MCF 10A (cell line): ENCODE measurements at regions of chr16 and their contacts with region 1.

Region 1: GRCh38 chr16:66872943-66873684 is 7.2 kb upstream of the PDP2 start:
- DNase-seq: peak; percentile 97
- H3K4me3 Mint-ChIP-seq: peak overlapping the region; percentile 71
- H3K27ac Mint-ChIP-seq: peak overlapping the region; percentile 51
- H3K4me1 Mint-ChIP-seq: peaks cover 14% of the 10 kb centered on the region
- H3K27me3 Mint-ChIP-seq: no peaks in the 10 kb centered on the region
- CTCF ChIP-seq: peak; percentile 90

Region 2: DNA sequence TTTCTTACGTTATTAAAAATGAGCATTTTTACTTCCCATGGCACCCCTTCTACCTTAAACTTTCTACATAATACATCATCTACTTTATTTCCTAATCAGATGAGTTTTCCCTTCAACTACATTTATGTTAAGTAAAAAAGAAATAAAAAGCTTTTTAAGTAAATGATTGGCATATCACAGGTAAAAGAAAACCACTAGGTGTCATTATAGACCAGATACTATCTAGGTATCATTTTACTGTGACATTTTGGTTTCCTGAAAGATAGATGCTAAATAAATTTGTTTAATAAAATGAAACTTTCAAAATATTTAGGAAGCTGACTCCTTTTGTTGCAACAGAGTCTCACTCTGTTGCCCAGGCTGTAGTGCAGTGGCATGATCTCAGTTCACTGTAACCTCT is 310.7 kb before region 1 on chr16:
- CTCF ChIA-PET with region 1: interaction called, 14 read pairs
- POLR2A ChIA-PET with region 1: no interaction called
- intact Hi-C with region 1: no loop called
- DNase-seq: no peak
- H3K4me3 Mint-ChIP-seq: no peak overlapping the region
- H3K27ac Mint-ChIP-seq: no peak overlapping the region
- H3K4me1 Mint-ChIP-seq: no peaks in the 10 kb centered on the region
- H3K27me3 Mint-ChIP-seq: no peaks in the 10 kb centered on the region
- CTCF ChIP-seq: peak; percentile 24

Region 3: DNA sequence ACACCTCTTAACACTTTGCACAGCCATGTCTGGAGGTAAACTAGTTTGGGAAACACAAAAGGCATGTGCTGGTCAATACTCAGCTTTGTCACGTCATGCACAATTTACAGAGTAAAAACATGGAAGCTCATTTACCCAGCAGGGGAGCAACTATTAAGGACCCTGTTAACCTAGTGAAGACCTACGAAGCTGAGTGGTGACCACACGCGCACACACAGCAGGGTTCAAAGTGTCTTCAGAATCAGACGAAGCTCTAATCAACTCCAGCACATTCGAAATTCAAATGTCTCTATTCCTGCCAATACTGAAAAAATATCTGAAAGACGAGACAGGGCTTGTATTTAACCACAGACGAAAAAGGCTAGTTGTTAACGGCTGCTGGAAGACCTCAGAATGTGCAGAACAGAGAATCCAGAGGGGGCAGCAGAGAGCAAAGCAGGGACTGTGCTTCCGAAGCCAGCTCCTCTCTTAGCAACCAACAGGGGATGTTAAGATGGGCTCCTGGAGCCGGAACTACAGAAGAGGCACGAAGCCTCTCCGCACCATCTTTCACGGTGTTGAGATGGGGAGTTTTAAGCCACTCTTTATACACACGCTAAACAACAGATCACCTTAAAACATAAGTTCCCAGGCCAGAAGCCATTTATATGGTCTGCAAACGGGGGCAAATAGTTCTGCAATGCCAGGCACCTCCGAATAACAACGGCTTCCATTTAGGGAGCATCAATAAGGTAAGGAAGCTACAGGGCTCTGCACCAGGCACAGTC is 222.2 kb before region 1 on chr16:
- CTCF ChIA-PET with region 1: interaction called, 12 read pairs
- POLR2A ChIA-PET with region 1: interaction called, 3 read pairs
- intact Hi-C with region 1: no loop called
- DNase-seq: peak; percentile 84
- H3K4me3 Mint-ChIP-seq: peak overlapping the region; percentile 50
- H3K27ac Mint-ChIP-seq: peak overlapping the region; percentile 64
- H3K4me1 Mint-ChIP-seq: peaks cover 39% of the 10 kb centered on the region
- H3K27me3 Mint-ChIP-seq: no peaks in the 10 kb centered on the region
- CTCF ChIP-seq: peak; percentile 90

Region 4: DNA sequence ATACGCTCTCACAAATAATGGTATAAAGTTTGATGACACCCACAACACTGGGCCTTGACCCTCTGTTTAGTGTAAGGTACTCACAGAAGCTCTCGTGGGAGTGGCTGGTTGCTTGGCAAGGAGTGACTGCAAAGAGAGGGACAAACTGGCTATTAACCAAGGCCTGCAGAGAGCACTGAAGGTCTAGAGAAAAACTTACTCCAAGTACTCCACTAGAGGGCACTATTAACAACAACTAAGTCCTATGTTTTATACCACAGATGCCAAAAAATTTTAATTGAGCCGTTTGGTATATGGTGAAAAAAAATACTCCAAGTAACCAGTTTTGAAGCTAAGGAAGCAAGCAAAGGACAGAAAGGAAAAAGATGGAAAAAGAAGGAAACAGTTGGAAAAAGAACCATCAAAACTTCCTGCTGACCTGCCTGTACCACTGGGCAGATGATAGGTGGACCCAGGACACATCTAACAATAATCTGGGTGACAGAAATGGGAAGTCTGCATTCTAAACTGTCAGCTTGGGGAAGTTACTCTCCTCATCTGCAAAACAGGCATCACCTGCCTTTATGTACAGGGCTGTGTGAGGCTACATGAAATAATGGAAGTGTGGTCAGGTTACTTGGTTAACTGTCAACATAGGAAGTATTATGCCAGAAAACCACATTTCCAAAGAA is 144.9 kb before region 1 on chr16:
- CTCF ChIA-PET with region 1: interaction called, 46 read pairs
- POLR2A ChIA-PET with region 1: interaction called, 3 read pairs
- intact Hi-C with region 1: loop called (anchors 1 kb)
- DNase-seq: peak; percentile 63
- H3K4me3 Mint-ChIP-seq: no peak overlapping the region
- H3K27ac Mint-ChIP-seq: no peak overlapping the region
- H3K4me1 Mint-ChIP-seq: peaks cover 7% of the 10 kb centered on the region
- H3K27me3 Mint-ChIP-seq: no peaks in the 10 kb centered on the region
- CTCF ChIP-seq: peak; percentile 53

Region 5: GRCh38 chr16:66830422-66831404 is 42.4 kb before region 1 on chr16 and contains the start of gene NAE1:
- CTCF ChIA-PET with region 1: interaction called, 197 read pairs
- POLR2A ChIA-PET with region 1: interaction called, 23 read pairs
- intact Hi-C with region 1: loop called (anchors 2 kb)
- DNase-seq: peak; percentile 86
- H3K4me3 Mint-ChIP-seq: peak within 1 kb of the TSS; percentile 66
- H3K27ac Mint-ChIP-seq: no peak within 1 kb of the TSS
- H3K4me1 Mint-ChIP-seq: peaks cover 31% of the 10 kb centered on the region
- H3K27me3 Mint-ChIP-seq: no peaks in the 10 kb centered on the region
- CTCF ChIP-seq: peak; percentile 94
- total RNA-seq, gene NAE1: 65.5 and 65.7 TPM in 2 replicates

Region 6: DNA sequence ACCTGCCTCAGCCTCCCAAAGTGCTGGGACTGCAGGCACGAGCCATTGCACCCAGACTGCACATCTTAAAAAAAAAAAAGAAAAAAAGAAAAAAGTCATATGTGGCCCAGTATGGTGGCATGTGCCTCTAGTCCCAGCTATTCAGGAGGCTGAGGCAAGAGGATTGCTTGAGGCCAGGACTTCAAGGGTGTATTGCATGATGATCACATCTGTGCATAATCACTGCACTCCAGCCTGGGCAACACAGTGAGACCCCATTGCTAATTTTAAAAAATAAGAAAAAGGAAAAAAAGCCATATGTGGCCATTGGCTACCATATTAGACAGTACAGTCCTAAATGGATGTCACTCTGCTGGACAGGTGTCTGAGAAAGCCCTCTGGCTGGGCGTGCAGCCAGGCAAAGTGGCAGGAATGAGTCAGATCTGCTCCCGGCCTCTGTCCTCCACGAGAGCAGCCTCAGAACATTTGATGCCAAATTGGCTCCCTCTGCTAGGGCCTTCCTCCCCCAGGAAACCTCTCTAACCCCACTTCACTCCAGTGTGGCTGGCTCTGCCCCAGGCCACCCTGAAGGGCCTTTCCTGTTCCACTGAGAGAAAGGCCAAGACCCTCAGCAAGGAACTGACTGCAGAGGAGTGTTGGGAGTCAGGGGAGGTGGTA is 14.2 kb before region 1 on chr16:
- CTCF ChIA-PET with region 1: interaction called, 43 read pairs
- POLR2A ChIA-PET with region 1: no interaction called
- intact Hi-C with region 1: no loop called
- DNase-seq: peak; percentile 87
- H3K4me3 Mint-ChIP-seq: no peak overlapping the region
- H3K27ac Mint-ChIP-seq: no peak overlapping the region
- H3K4me1 Mint-ChIP-seq: peaks cover 5% of the 10 kb centered on the region
- H3K27me3 Mint-ChIP-seq: no peaks in the 10 kb centered on the region
- CTCF ChIP-seq: no peak

Region 7: GRCh38 chr16:67173808-67174705 is 300.9 kb after region 1 on chr16:
- CTCF ChIA-PET with region 1: no interaction called
- POLR2A ChIA-PET with region 1: no interaction called
- intact Hi-C with region 1: no loop called
- DNase-seq: peak; percentile 91
- H3K4me3 Mint-ChIP-seq: peak overlapping the region; percentile 81
- H3K27ac Mint-ChIP-seq: peak overlapping the region; percentile 79
- H3K4me1 Mint-ChIP-seq: peaks cover 61% of the 10 kb centered on the region
- H3K27me3 Mint-ChIP-seq: no peaks in the 10 kb centered on the region
- CTCF ChIP-seq: peak; percentile 8